Right ventricle myocardium inferior (tissue), 1 donor: ENCODE measurements at regions of chr1 and their contacts with region 1.

Region 1: GRCh38 chr1:151024540-151025146 is 11.7 kb upstream of the BNIPL start:
- DNase-seq: peak; percentile 84
- ATAC-seq: peak; percentile 82

Region 2: DNA sequence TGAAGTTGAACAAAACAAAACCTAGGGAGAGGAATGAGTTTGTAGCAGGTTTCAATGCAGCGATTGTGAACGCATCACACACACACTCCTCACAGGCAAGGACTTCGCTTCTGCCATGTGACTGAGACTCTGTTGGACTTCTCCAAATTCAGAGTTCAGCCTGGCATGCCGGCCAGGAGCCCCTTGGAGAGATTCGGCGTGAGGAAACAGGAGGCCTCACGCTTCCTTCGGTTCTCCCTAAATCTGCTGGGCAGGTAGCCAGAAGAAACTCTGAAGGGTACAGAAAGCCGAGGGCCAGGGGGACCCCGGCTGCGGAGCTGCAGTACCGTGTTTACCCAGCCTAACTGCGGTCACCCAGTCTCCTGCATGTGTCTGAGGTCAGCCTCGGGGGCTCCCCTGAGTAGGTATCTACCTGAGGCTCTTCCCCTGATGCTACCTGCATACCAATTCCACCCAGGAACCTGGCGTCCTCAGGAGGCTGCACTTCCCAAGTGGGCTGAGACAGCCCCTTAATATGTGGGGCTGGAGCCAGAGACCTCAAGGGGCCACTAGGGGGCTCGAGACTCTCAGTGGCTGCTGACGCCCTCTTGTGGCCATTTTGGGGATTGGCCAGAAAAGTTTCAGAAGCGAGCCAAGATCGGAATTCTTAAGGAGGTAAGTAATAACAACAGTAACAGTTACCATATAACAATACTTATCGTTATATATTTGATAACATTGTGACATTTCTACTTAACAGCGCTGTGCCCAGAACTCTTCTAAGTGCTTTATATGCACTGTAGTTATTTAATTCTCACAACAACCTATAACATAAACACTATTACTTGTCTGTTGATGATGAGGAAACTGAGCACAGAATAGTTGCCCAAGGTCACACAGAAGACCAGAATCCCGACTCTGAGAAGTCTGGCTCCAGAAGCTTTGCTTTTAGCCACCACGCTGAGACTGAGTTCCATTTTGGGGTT is 45.3 kb before region 1 on chr1:
- intact Hi-C with region 1: no loop called
- DNase-seq: peak; percentile 91
- ATAC-seq: peak; percentile 42

Region 3: GRCh38 chr1:150995460-150995859 is 29.2 kb before region 1 on chr1:
- intact Hi-C with region 1: no loop called
- DNase-seq: no peak
- ATAC-seq: peak; percentile 40

Region 4: GRCh38 chr1:151013518-151013917 is 11.1 kb before region 1 on chr1:
- intact Hi-C with region 1: loop called (anchors 1 kb)
- DNase-seq: no peak
- ATAC-seq: peak; percentile 85

Region 5: GRCh38 chr1:151070474-151071276 is 46.0 kb after region 1 on chr1 and contains the start of gene GABPB2:
- intact Hi-C with region 1: loop called (anchors 2 kb)
- DNase-seq: peak; percentile 94
- ATAC-seq: peak; percentile 95
- total RNA-seq, gene GABPB2: 8.4 TPM